Activated CD4-positive, alpha-beta T cell treated with anti-CD3 and anti-CD28 coated beads for 36 hours (primary cell): ENCODE measurements at regions of chr2 and their contacts with region 1.

Region 1: GRCh38 chr2:224969633-224970260 is 72.5 kb downstream of the DOCK10 start:
- DNase-seq: no peak
- ATAC-seq: peak; percentile 59
- H3K4me3 Mint-ChIP-seq: no peak overlapping the region
- H3K27ac Mint-ChIP-seq: peak overlapping the region; percentile 68
- H3K4me1 Mint-ChIP-seq: peaks cover 62% of the 10 kb centered on the region
- H3K27me3 Mint-ChIP-seq: no peaks in the 10 kb centered on the region

Region 2: DNA sequence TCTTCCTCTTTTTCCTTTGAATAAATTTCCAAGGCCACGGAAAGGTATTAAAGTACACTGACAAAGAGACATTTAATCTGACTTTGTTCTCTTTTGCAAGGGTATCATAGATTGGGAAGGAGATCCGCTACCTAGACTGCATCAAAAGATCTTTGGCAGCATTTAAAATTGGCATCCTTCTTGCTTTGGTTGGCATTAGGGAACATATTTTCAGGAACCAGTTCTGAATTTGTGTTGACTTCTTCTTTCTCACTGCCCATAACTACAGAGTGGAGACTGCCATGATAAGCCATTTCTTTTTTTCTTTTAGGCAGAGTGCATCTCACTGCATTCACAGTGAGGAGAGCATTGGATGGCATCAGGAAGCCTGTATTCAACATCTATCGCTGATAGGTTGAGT is 10.9 kb before region 1 on chr2:
- CTCF ChIA-PET with region 1: interaction called, 8 read pairs
- POLR2A ChIA-PET with region 1: interaction called, 3 read pairs
- intact Hi-C with region 1: loop called in 1 of 2 experiments (anchors 1 kb)
- DNase-seq: no peak
- ATAC-seq: no peak
- H3K4me3 Mint-ChIP-seq: no peak overlapping the region
- H3K27ac Mint-ChIP-seq: peak overlapping the region; percentile 53
- H3K4me1 Mint-ChIP-seq: peaks cover 70% of the 10 kb centered on the region
- H3K27me3 Mint-ChIP-seq: no peaks in the 10 kb centered on the region

Region 3: GRCh38 chr2:225112362-225113126 is 142.8 kb after region 1 on chr2:
- CTCF ChIA-PET with region 1: no interaction called
- POLR2A ChIA-PET with region 1: no interaction called
- intact Hi-C with region 1: no loop called
- DNase-seq: no peak
- ATAC-seq: no peak
- H3K4me3 Mint-ChIP-seq: no peak overlapping the region
- H3K27ac Mint-ChIP-seq: no peak overlapping the region
- H3K4me1 Mint-ChIP-seq: peaks cover 5% of the 10 kb centered on the region
- H3K27me3 Mint-ChIP-seq: no peaks in the 10 kb centered on the region

Region 4: DNA sequence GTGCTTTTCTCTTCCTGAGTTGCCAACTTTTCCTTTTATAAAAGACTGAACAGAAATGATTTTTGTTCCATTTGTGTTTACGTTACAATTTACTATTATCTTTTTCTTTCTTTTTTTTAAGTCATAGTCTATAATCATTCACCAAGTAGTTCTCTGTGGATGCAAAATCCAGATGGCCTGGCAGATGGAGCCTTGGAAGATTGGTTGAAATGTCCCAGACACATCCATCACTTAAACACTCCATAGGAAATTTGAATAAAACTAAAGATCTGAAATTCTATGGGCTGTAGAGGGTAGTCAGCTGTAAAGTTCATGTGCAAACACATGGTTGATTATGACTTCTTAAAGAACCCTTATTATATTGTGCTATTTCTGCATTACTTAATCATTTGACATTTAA is 237.3 kb after region 1 on chr2:
- CTCF ChIA-PET with region 1: no interaction called
- POLR2A ChIA-PET with region 1: no interaction called
- intact Hi-C with region 1: no loop called
- DNase-seq: no peak
- ATAC-seq: no peak
- H3K4me3 Mint-ChIP-seq: no peak overlapping the region
- H3K27ac Mint-ChIP-seq: no peak overlapping the region
- H3K4me1 Mint-ChIP-seq: no peaks in the 10 kb centered on the region
- H3K27me3 Mint-ChIP-seq: peaks cover 2% of the 10 kb centered on the region